ENCODE measurements at regions of chr14 and their contacts with region 1.

Region 1: DNA sequence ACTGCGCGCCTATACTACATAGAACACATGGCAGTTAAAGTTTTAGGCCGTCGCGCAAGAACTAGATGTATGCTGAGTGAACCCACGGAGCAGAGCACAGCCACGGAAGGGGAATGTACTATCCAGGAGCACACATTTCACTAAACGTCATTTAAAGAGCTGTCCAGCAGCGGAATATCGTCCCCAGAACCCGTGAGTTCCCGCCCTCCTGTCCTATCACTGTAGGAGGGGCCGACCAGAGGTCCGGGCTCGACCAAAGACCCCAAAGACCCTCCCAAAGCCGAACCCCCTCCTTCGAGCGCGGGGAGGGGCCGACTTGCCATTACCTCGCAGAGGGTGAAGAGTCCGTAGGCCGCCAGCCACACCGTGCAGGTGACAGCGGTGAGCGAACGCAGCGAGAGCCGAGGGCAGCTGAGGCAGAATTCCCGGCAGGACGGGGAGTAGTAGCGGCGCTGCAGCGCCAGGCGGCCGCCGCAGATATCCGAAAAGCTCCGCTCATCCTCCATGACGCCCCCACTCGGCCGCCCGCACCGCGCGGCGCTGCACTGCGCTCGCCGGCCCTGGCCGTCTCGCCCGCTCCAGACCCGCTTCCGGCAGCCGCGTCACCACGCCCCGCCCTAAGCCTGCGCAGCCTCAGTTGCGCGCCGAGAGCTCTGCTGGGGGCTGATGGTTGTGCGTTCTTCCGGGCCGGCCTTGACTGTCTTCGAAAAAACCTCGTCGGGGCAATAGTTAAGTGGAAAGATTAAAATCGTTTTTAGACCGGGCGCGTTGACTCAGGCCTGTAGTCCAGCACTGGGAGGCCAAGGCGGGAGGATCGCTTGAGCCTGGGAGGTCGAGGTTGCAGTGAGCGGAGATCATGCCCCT is at the start of gene PIGH:
- DNase-seq: peak; percentile 99
- H3K4me3 Mint-ChIP-seq: peak within 1 kb of the TSS; percentile 90
- H3K27ac Mint-ChIP-seq: peak within 1 kb of the TSS; percentile 96
- H3K4me1 Mint-ChIP-seq: peaks cover 31% of the 10 kb centered on the region
- H3K27me3 Mint-ChIP-seq: peaks cover 14% of the 10 kb centered on the region
- total RNA-seq, gene PIGH: 21.2 and 22.7 TPM in 2 replicates

Region 2: GRCh38 chr14:67532998-67533753 is 66.8 kb before region 1 on chr14 and contains the start of gene PLEKHH1:
- intact Hi-C with region 1: loop called (anchors 1 kb)
- DNase-seq: peak; percentile 89
- H3K4me3 Mint-ChIP-seq: peak within 1 kb of the TSS; percentile 77
- H3K27ac Mint-ChIP-seq: no peak within 1 kb of the TSS
- H3K4me1 Mint-ChIP-seq: peaks cover 5% of the 10 kb centered on the region
- H3K27me3 Mint-ChIP-seq: peaks cover 54% of the 10 kb centered on the region
- total RNA-seq, gene PLEKHH1: 1.5 and 1.7 TPM in 2 replicates

Region 3: GRCh38 chr14:67619446-67620216 is 19.7 kb after region 1 on chr14 and contains the start of gene ARG2:
- intact Hi-C with region 1: loop called (anchors 1 kb)
- DNase-seq: peak; percentile 99
- H3K4me3 Mint-ChIP-seq: peak within 1 kb of the TSS; percentile 92
- H3K27ac Mint-ChIP-seq: peak within 1 kb of the TSS; percentile 85
- H3K4me1 Mint-ChIP-seq: peaks cover 33% of the 10 kb centered on the region
- H3K27me3 Mint-ChIP-seq: peaks cover 15% of the 10 kb centered on the region
- total RNA-seq, gene ARG2: 4.7 and 5.0 TPM in 2 replicates

Region 4: DNA sequence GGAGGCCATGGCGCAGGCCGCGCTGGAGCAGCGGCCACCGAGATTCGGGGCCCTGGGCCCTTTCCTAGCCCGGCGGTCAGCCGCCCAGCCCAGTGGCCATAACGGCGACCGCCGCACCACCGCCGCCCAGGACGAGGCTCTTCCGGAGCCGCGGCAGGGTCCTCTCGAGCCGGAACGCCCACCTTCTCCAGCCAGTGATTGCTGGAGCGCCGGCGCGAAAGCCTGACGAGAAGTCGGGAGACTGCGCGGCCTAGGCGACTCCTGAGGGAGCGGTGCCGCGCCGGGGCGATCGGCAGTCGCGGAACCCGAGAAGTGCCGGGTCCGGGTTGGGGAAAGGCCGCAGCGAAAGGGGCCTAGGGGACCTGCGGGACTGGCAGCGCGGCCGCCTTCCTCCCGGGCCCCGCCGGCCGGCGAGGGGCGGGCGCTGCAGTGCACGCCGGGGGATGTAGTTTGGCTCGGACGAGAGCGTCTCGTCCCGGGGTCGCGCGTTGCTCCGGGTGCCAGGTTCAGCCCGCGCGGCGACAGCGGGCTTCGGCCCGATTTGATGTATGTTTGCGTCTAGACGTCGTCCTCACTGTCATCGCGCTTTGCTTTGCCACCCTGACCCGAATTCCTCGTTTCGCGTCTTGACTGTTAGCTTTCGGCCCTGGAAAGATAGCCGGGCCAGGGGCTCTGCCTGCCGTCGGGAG is 74.7 kb after region 1 on chr14 and contains the start of gene VTI1B:
- intact Hi-C with region 1: loop called (anchors 1 kb)
- DNase-seq: peak; percentile 93
- H3K4me3 Mint-ChIP-seq: peak within 1 kb of the TSS; percentile 90
- H3K27ac Mint-ChIP-seq: peak within 1 kb of the TSS; percentile 90
- H3K4me1 Mint-ChIP-seq: peaks cover 35% of the 10 kb centered on the region
- H3K27me3 Mint-ChIP-seq: no peaks in the 10 kb centered on the region
- total RNA-seq, gene VTI1B: 75.3 and 78.5 TPM in 2 replicates